GM12878 (cell line): ENCODE measurements at regions of chr9 and their contacts with region 1.

Region 1: DNA sequence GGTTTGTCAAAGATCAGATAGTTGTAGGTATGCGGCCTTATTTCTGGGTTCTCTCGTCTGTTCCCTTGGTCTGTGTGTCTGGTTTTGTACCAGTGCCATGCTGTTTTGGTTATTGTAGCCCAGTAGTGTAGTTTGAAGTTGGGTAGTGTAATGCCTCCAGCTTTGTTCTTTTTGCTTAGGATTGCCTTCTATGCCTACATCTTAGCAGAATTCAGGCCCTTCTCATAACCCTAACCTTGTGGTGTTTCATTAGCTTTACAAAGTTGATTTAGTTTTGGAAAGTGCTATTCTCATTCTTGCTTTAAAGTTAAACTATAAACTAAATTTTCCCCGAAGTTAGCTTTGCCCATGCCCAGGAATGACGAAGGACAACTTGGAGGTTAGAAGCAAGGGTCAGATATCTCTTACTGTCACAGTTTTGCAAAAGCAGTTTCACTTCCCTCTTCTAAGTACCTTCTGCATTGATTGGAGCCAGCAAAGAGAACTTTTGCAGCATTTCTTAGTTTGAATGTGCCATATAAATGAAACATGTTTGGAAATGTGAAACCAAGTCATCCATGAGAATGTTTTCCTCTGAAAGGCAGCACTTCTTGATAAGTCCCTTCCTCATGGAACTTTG is 274.3 kb upstream of the DMRT1 start:
- DNase-seq: peak; percentile 3
- ATAC-seq: peak; percentile 95
- H3K4me3 ChIP-seq: no peak overlapping the region
- H3K27ac ChIP-seq: no peak overlapping the region
- H3K4me1 ChIP-seq: no peaks in the 10 kb centered on the region
- H3K27me3 ChIP-seq: peaks cover 0 to 3% of the 10 kb centered on the region in 2 experiments; a peak in 1 of 4 replicates
- CTCF ChIP-seq: no peak
- EP300 ChIP-seq: peak in 1 of 2 experiments; percentile 62; a peak in 2 of 4 replicates
- POLR2A ChIP-seq: no peak
- RAD21 ChIP-seq: no peak

Region 2: GRCh38 chr9:503881-504852 is 63.1 kb before region 1 on chr9:
- CTCF ChIA-PET with region 1: no interaction called
- POLR2A ChIA-PET with region 1: no interaction called
- RAD21 ChIA-PET with region 1: no interaction called
- SMC1A ChIA-PET with region 1: no interaction called
- in situ Hi-C with region 1: loop called (anchors 10 kb)
- intact Hi-C with region 1: no loop called
- DNase-seq: no peak
- ATAC-seq: peak; percentile 96
- H3K4me3 ChIP-seq: peak within 1 kb of the TSS; percentile 43; the same call in 1 of the 2 replicates
- H3K27ac ChIP-seq: no peak within 1 kb of the TSS
- H3K4me1 ChIP-seq: peaks cover 6% of the 10 kb centered on the region
- H3K27me3 ChIP-seq: peaks cover 2 to 14% of the 10 kb centered on the region in 2 experiments
- CTCF ChIP-seq: peak; percentile 28 to 52 (median 31); a peak in 4 of 6 replicates
- EP300 ChIP-seq: no peak
- POLR2A ChIP-seq: no peak
- RAD21 ChIP-seq: no peak